ENCODE measurements at regions of chr11 and their contacts with region 1.

Region 1: DNA sequence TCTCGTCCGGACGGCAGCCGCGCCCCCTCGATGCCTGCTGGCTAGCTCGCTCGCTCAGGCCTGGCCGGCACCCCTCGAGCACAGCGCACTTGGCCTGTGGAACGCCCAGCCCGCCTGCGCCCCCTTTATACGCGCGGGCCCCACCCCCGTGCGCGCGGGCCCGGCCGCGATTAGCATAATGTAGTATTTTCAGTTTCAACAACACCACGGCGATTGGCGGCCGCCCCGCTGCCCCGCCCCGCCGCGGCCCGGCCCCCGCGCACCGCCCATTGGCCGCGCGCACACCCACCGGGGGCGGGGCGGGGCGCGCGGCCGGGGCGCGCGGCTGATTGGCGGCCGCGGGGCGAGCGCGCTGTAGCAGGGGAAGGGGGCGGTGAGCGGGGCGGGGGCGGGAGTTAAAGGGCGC is at the start of gene CDKN1C:
- DNase-seq: no peak
- H3K4me3 ChIP-seq: peak within 1 kb of the TSS; percentile 73 to 85
- H3K27ac ChIP-seq: peak within 1 kb of the TSS; percentile 95
- H3K4me1 ChIP-seq: peaks cover 36% of the 10 kb centered on the region
- H3K27me3 ChIP-seq: no peaks in the 10 kb centered on the region
- CTCF ChIP-seq: peak in 1 of 3 experiments; percentile 3
- POLR2A ChIP-seq: peak in 1 of 2 donors; percentile 95
- total RNA-seq, gene CDKN1C: 67.3 TPM

Region 2: DNA sequence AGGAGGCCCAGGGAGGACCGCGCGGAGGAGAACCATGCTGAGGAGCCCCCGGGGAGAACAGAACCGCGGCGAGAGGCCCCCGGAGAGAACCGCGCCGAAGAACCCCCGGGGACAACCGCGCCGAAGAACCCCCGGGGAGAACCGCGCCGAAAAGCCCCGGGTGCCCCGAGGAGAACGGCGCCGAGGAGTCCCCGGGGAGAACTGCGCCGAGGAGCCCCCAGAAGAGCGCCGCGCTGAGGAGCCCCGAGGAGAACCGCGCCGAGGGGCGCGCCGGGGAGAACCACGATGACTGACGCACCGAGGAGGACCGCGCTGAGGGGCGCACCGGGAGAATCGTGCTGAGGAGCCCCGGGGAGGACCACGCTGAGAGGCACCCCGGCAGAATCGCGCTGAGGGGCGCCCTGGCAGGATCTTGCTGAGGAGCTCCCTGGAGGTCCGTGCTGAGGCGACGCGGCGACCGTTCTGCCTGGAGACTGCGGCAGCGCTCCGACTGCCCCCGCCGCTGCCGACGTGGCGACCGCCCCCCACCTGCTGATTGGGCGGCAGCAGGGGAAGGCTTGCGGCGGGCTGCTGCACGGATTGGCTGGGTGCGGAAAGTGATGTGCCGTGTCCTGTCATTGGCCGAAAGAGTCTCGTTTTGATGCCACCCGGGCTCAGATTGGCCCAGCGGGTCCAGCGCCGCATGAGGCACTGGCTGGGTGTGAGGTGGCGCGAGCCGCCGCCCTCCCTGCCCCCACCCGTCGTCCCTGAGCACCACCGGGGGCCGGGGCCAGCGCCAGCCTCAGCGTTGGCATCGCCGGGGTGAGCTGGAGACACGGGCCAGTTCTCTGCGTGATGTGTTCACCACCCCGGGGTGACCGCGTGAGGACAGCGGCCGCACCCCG is 185.9 kb before region 1 on chr11 and contains the start of gene KCNQ1OT1:
- intact Hi-C with region 1: loop called (anchors 5 kb)
- DNase-seq: peak in 1 of 2 donors; percentile 96
- H3K4me3 ChIP-seq: peak within 1 kb of the TSS; percentile 53 to 71
- H3K27ac ChIP-seq: peak within 1 kb of the TSS; percentile 88
- H3K4me1 ChIP-seq: peaks cover 14% of the 10 kb centered on the region
- H3K27me3 ChIP-seq: no peaks in the 10 kb centered on the region
- CTCF ChIP-seq: no peak
- POLR2A ChIP-seq: peak in 1 of 2 donors; percentile 94
- total RNA-seq, gene KCNQ1OT1: 3.4 TPM

Region 3: GRCh38 chr11:2825889-2826678 is 59.6 kb before region 1 on chr11:
- intact Hi-C with region 1: loop called (anchors 1 kb)
- DNase-seq: peak in 1 of 2 donors; percentile 98
- H3K4me3 ChIP-seq: peak overlapping the region in 1 of 2 donors; percentile 38
- H3K27ac ChIP-seq: peak overlapping the region; percentile 88
- H3K4me1 ChIP-seq: peaks cover 26% of the 10 kb centered on the region
- H3K27me3 ChIP-seq: no peaks in the 10 kb centered on the region
- CTCF ChIP-seq: no peak
- POLR2A ChIP-seq: peak in 1 of 2 donors; percentile 34